Calu3 (cell line): ENCODE measurements at regions of chr5 and their contacts with region 1.

Region 1: GRCh38 chr5:149618581-149619251 is 37.4 kb downstream of the ARHGEF37 start:
- DNase-seq: peak; percentile 67
- H3K4me3 Mint-ChIP-seq: no peak overlapping the region
- H3K27ac Mint-ChIP-seq: peak overlapping the region; percentile 22
- H3K4me1 Mint-ChIP-seq: peaks cover 36% of the 10 kb centered on the region
- H3K27me3 Mint-ChIP-seq: no peaks in the 10 kb centered on the region
- CTCF ChIP-seq: peak; percentile 75

Region 2: DNA sequence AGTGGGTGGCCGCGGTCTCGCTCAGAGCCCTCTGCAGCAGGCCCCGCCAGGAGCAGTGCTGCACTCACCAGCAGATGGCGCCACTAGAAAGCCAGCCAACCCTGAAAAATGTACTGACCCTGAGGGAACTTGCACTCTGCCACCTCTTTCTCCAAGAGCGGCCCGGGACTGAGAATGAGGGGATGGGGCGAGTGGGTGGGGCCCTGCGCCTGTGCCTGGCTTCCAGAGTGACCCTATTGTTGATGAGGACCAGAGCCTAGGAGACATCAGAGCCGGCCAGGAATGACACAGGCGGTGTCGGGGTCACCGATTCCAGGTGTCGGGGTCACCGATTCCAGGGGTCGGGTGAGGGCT is 236.8 kb before region 1 on chr5:
- CTCF ChIA-PET with region 1: no interaction called
- intact Hi-C with region 1: loop called (anchors 2 kb)
- DNase-seq: peak; percentile 88
- H3K4me3 Mint-ChIP-seq: no peak overlapping the region
- H3K27ac Mint-ChIP-seq: no peak overlapping the region
- H3K4me1 Mint-ChIP-seq: no peaks in the 10 kb centered on the region
- H3K27me3 Mint-ChIP-seq: peaks cover 39% of the 10 kb centered on the region
- CTCF ChIP-seq: peak; percentile 93

Region 3: DNA sequence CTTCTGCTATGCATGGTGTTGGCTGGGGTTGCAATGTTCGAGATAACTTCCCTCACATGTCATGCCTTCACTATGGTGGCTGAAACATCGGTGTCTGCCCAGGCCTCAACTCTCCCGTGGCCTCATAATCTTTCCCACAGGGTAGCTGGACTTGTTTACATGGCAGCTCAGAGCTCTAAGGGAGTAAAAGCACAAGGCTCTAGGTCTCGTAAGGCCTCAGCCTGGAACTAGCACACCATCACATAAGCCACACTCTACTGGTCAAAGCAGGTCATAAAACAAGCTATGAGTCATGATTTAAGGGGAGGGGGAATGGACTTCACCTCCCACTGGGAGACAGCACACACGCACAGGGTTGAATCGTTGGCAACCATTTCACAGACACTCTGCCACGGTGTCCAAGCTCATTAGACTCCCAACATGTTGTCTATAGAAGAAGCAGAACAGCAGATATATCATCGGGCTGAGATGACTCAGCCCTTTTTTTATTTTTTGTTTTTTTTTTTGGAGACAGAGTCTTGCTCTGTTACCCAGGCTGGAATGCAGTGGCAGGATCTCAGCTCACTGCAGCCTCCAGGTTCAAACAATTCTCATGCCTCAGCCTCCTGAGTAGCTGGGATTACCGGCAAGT is 172.9 kb before region 1 on chr5:
- CTCF ChIA-PET with region 1: interaction called, 9 read pairs
- intact Hi-C with region 1: loop called (anchors 1 kb)
- DNase-seq: no peak
- H3K4me3 Mint-ChIP-seq: no peak overlapping the region
- H3K27ac Mint-ChIP-seq: peak overlapping the region; percentile 49
- H3K4me1 Mint-ChIP-seq: peaks cover 47% of the 10 kb centered on the region
- H3K27me3 Mint-ChIP-seq: no peaks in the 10 kb centered on the region
- CTCF ChIP-seq: no peak

Region 4: DNA sequence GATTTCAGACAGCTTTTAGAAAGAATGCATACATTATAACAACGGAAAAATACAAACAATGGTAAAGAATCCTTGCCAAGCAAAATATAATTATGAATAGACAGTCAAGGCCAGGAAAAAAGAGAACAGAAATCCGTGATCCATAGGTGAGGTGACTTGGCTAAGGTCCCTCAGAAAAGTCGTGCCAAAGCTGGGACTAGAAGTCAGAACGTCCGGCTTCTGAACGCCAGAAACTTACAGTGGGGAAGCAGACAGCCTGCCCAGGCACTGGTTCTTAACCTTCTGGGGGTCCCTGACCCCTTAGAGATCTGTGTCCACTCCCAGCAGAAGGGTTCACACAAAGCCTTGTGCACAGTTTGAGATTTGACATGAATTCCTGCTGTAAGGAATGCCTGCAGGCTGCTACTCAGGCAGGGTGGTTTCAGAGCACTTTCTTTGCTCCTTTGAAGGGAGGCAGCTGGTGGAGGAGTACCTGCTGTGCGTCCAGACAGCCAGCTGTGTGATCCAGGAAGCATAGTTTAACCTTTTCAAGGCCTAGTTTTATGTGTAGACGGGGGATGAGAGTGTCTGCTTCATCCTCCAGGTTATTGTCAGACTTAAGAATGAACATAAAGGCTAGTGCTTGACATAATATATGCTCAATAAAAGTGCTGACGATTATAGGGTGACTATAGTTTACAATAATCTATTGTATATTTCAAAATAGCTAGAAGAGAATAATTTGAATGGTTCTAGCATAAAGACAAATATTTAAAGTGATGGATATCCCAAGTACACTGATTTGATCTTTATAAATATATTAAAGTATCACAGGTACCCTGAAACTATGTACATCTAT is 36.6 kb before region 1 on chr5:
- CTCF ChIA-PET with region 1: interaction called, 6 read pairs
- intact Hi-C with region 1: loop called (anchors 2 kb)
- DNase-seq: no peak
- H3K4me3 Mint-ChIP-seq: peak overlapping the region; percentile 75
- H3K27ac Mint-ChIP-seq: peak overlapping the region; percentile 67
- H3K4me1 Mint-ChIP-seq: peaks cover 32% of the 10 kb centered on the region
- H3K27me3 Mint-ChIP-seq: no peaks in the 10 kb centered on the region
- CTCF ChIP-seq: no peak